ENCODE measurements at regions of chr2 and their contacts with region 1.

Region 1: DNA sequence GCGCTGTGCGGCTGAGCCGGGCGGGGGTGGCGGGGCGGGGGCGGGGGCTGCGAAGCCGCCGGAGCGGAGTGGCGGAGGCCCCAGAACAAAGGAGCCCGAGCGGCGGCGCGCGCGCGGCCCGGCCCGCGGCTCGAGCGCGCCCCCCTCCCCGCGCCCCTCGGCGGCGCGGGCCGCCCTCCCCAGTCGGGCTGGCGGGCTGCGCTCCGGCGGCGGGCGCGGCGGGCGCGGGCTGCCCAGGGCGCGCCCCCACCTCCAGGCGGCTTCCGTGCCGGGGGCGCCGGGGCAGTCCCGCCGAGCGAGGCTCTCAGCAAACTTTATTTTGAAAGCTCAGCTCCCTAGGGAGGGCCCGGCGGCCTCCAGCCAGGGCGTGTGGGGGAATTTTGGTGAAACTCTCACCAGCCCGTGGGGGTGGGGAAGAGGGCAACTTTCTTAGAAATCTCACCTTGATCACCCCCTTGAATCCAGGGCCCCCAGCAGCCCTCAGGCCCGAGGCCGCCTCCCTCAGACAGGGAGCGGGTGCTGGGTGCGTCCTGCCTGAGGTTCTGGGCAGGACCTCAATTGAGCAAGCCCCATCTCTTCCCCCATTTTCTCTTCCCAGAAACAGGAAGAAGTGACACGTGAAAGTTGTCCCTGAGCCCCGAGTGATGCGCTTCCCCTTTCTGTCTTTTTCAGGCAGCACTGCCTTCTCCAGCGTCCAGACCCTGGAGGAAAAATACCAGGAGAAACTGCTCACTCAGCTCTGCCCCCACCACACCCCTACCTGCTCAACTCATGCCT is 786 bp downstream of the TET3 start:
- DNase-seq: peak; percentile 92
- ATAC-seq: peak; percentile 72
- H3K4me3 ChIP-seq: peak overlapping the region; percentile 53 to 78 (median 66)
- H3K4me3 Mint-ChIP-seq: peak overlapping the region; percentile 82
- H3K27ac ChIP-seq: peak overlapping the region; percentile 71 to 72
- H3K27ac Mint-ChIP-seq: peak overlapping the region; percentile 89
- H3K4me1 ChIP-seq: peaks cover 55 to 66% of the 10 kb centered on the region in 2 donors
- H3K4me1 Mint-ChIP-seq: peaks cover 77% of the 10 kb centered on the region
- H3K27me3 ChIP-seq: peaks cover 0 to 3% (median under 1%) of the 10 kb centered on the region in 4 experiments
- H3K27me3 Mint-ChIP-seq: no peaks in the 10 kb centered on the region
- CTCF ChIP-seq: no peak

Region 2: GRCh38 chr2:73907840-73908452 is 77.5 kb before region 1 on chr2:
- CTCF ChIA-PET with region 1: interaction called, 16 read pairs
- POLR2A ChIA-PET with region 1: no interaction called
- intact Hi-C with region 1: loop called (anchors 5 kb)
- DNase-seq: peak; percentile 71
- ATAC-seq: peak; percentile 81
- H3K4me3 ChIP-seq: no peak overlapping the region
- H3K4me3 Mint-ChIP-seq: no peak overlapping the region
- H3K27ac ChIP-seq: no peak overlapping the region
- H3K27ac Mint-ChIP-seq: no peak overlapping the region
- H3K4me1 ChIP-seq: peaks cover 0 to 2% of the 10 kb centered on the region in 2 donors
- H3K4me1 Mint-ChIP-seq: peaks cover 2% of the 10 kb centered on the region
- H3K27me3 ChIP-seq: no peaks in the 10 kb centered on the region
- H3K27me3 Mint-ChIP-seq: no peaks in the 10 kb centered on the region
- CTCF ChIP-seq: peak; percentile 54

Region 3: DNA sequence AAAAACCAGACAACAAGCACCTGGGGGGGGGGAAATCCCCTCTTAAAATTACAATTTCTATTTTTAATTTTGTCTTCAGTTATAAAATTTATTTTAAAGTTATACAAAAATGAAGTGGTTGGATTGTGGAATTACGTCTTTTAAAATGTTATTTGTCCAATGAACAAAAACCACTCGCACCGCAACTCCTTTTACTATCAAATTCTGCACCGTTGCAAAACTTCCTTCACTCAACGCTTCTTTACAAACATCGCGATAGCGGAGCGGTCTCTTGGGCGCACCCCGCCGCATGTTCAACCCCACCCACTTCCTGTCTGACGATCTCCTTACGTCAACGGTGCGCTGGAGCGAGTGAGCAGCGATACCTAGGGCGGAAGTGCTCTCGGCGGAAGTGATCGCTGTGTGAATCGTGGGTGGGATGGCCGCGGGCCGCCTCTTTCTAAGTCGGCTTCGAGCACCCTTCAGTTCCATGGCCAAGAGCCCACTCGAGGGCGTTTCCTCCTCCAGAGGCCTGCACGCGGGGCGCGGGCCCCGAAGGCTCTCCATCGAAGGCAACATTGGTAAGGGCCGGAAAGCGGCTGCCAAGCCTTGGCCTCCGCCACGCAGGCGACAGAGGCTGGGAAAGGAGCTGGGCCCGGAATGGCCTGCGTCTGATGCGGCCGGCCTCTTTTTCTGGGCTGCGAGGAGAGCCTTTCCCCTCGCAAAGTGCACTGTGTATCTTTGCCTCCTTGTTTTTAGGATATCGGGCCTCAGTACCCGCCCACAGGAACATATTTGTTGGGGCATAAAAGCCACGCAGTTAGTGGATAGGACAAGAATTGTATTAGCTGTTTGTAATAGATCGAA is 58.8 kb before region 1 on chr2 and contains the start of gene DGUOK:
- CTCF ChIA-PET with region 1: interaction called, 3 read pairs
- POLR2A ChIA-PET with region 1: interaction called, 5 read pairs
- intact Hi-C with region 1: loop called (anchors 1 kb)
- DNase-seq: peak; percentile 99
- ATAC-seq: peak; percentile 98
- H3K4me3 ChIP-seq: peak within 1 kb of the TSS; percentile 69 to 89 (median 76)
- H3K4me3 Mint-ChIP-seq: peak within 1 kb of the TSS; percentile 86
- H3K27ac ChIP-seq: peak within 1 kb of the TSS; percentile 95 to 99
- H3K27ac Mint-ChIP-seq: peak within 1 kb of the TSS; percentile 90
- H3K4me1 ChIP-seq: peaks cover 33 to 37% of the 10 kb centered on the region in 2 donors
- H3K4me1 Mint-ChIP-seq: peaks cover 61% of the 10 kb centered on the region
- H3K27me3 ChIP-seq: no peaks in the 10 kb centered on the region
- H3K27me3 Mint-ChIP-seq: no peaks in the 10 kb centered on the region
- CTCF ChIP-seq: no peak
- total RNA-seq, gene DGUOK: 61.7 and 65.4 TPM in 2 replicates

Region 4: GRCh38 chr2:73944714-73945113 is 40.8 kb before region 1 on chr2:
- CTCF ChIA-PET with region 1: interaction called, 3 read pairs
- POLR2A ChIA-PET with region 1: no interaction called
- intact Hi-C with region 1: loop called (anchors 5 kb)
- DNase-seq: no peak
- ATAC-seq: no peak
- H3K4me3 ChIP-seq: no peak overlapping the region
- H3K4me3 Mint-ChIP-seq: no peak overlapping the region
- H3K27ac ChIP-seq: peak overlapping the region in 1 of 2 donors; percentile 13
- H3K27ac Mint-ChIP-seq: no peak overlapping the region
- H3K4me1 ChIP-seq: peaks cover 20 to 25% of the 10 kb centered on the region in 2 donors
- H3K4me1 Mint-ChIP-seq: peaks cover 47% of the 10 kb centered on the region
- H3K27me3 ChIP-seq: no peaks in the 10 kb centered on the region
- H3K27me3 Mint-ChIP-seq: no peaks in the 10 kb centered on the region
- CTCF ChIP-seq: no peak

Region 5: DNA sequence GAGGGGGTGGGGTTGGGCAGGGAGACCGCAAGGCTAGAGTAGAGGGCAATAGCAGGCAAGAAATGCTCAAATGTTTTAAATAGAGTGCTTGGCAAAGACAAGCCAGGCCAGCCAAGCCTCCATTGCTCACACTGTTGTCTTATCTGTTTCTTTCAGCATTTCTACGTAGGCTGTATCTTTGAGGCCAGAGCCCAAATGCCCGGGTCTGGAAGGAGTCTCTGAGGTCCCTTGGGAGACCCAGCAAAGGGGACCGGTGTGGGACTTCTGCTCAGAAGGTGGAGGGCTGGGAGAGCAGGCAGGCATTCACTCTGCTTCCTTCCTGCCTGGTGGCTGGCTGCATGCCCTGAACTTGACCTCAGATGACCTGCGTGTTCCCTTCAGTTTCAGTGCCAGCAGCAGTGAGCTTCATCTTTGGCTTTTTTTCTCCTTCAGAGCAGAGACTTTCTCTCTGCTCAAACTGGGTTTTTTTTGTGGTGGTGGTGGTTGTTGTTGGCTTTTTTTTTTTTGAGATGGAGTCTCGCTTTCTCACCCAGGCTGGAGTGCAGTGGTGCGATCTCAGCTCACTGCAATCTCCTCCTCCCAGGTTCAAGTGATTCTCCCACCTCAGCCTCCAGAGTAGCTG is 14.5 kb before region 1 on chr2:
- CTCF ChIA-PET with region 1: interaction called, 4 read pairs
- POLR2A ChIA-PET with region 1: no interaction called
- intact Hi-C with region 1: loop called (anchors 2 kb)
- DNase-seq: peak; percentile 76
- ATAC-seq: peak; percentile 86
- H3K4me3 ChIP-seq: peak overlapping the region in 3 of 5 experiments; percentile 23 to 47 (median 31)
- H3K4me3 Mint-ChIP-seq: peak overlapping the region; percentile 73
- H3K27ac ChIP-seq: peak overlapping the region; percentile 5 to 53
- H3K27ac Mint-ChIP-seq: peak overlapping the region; percentile 65
- H3K4me1 ChIP-seq: peaks cover 35 to 38% of the 10 kb centered on the region in 2 donors
- H3K4me1 Mint-ChIP-seq: peaks cover 46% of the 10 kb centered on the region
- H3K27me3 ChIP-seq: no peaks in the 10 kb centered on the region
- H3K27me3 Mint-ChIP-seq: no peaks in the 10 kb centered on the region
- CTCF ChIP-seq: no peak

Region 6: DNA sequence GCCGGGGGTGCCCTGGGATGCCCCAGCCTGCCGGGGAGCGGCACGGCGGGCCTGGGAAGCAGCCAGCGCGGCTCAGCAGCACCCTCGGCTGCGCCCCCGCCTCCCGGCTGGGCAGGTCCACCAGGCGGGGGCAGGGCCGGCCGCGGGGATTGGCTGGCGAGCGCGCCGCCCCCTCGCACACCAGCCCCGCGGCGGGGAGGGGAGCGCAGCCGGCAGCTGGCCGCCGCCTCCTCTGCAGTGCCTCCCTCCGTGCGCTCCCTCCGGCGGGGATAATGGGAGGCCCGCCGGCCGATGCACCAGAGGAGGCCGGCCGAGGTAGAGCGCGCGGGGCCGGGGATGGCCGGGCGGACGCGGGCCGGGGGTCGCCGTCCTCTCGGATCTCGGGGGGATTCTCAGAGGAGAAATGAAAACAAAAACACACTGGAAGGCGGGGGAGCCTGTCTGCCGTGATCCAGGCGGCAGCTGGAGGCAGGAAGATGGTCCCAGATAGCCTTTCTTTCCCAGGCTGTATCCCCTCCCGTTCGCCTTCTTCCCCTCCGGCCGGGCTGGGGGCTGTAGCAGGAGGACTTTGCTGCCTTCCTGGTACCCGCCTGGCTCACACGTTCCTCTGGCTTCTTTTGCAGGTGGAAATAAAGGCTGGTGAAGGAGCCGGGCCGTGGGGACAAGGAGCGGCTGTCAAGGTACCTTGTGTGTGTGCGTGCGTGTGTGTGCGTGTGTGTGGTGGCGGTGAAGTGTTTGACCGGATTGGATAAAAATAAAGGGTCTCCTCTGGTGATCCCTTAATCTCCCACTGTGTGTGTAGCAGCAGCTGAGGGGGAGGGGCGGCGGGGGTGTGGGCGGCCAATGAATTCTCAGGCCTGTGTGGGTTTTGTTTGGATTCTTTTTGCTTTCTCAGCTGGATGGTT is 17.2 kb after region 1 on chr2:
- CTCF ChIA-PET with region 1: interaction called, 19 read pairs
- POLR2A ChIA-PET with region 1: interaction called, 5 read pairs
- intact Hi-C with region 1: loop called (anchors 1 kb)
- DNase-seq: peak; percentile 86
- ATAC-seq: peak; percentile 98
- H3K4me3 ChIP-seq: peak overlapping the region in 4 of 5 experiments; percentile 35 to 60 (median 52)
- H3K4me3 Mint-ChIP-seq: peak overlapping the region; percentile 87
- H3K27ac ChIP-seq: no peak overlapping the region
- H3K27ac Mint-ChIP-seq: peak overlapping the region; percentile 53
- H3K4me1 ChIP-seq: peaks cover 15 to 29% of the 10 kb centered on the region in 2 donors
- H3K4me1 Mint-ChIP-seq: peaks cover 66% of the 10 kb centered on the region
- H3K27me3 ChIP-seq: no peaks in the 10 kb centered on the region
- H3K27me3 Mint-ChIP-seq: no peaks in the 10 kb centered on the region
- CTCF ChIP-seq: no peak

Region 7: GRCh38 chr2:74014813-74015212 is 29.3 kb after region 1 on chr2:
- CTCF ChIA-PET with region 1: no interaction called
- POLR2A ChIA-PET with region 1: no interaction called
- intact Hi-C with region 1: no loop called
- DNase-seq: no peak
- ATAC-seq: no peak
- H3K4me3 ChIP-seq: no peak overlapping the region
- H3K4me3 Mint-ChIP-seq: no peak overlapping the region
- H3K27ac ChIP-seq: no peak overlapping the region
- H3K27ac Mint-ChIP-seq: no peak overlapping the region
- H3K4me1 ChIP-seq: peaks cover 0 to 2% of the 10 kb centered on the region in 2 donors
- H3K4me1 Mint-ChIP-seq: peaks cover 16% of the 10 kb centered on the region
- H3K27me3 ChIP-seq: no peaks in the 10 kb centered on the region
- H3K27me3 Mint-ChIP-seq: no peaks in the 10 kb centered on the region
- CTCF ChIP-seq: no peak

Region 8: DNA sequence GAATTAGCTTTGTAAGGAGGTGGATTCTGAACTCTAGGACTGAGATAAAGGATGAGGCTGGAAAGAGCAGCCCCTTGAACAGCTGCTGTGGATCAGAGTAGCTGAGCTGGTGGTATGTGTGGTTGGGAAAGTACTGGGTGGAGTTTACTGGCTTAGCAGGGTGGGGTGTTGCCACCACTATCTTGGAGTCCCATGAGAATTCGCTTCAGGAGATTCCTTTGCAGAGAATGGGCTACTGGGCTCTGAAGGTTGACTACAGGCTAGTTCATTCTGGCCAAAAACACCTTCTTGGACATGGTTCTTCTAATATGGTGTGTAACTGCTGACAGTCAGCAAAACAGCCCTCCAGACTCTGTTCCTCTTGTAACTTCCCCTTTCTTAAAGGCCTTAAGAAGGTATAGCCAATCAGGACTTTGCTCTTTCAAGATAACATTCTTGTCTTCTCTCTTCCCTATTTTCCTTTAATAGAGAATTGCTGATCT is 51.9 kb after region 1 on chr2:
- CTCF ChIA-PET with region 1: no interaction called
- POLR2A ChIA-PET with region 1: interaction called, 3 read pairs
- intact Hi-C with region 1: loop called (anchors 2 kb)
- DNase-seq: peak; percentile 82
- ATAC-seq: peak; percentile 83
- H3K4me3 ChIP-seq: peak overlapping the region in 2 of 5 experiments; percentile 8 to 34
- H3K4me3 Mint-ChIP-seq: peak overlapping the region; percentile 82
- H3K27ac ChIP-seq: peak overlapping the region; percentile 73
- H3K27ac Mint-ChIP-seq: peak overlapping the region; percentile 88
- H3K4me1 ChIP-seq: peaks cover 72 to 73% of the 10 kb centered on the region in 2 donors
- H3K4me1 Mint-ChIP-seq: peaks cover 83% of the 10 kb centered on the region
- H3K27me3 ChIP-seq: no peaks in the 10 kb centered on the region
- H3K27me3 Mint-ChIP-seq: no peaks in the 10 kb centered on the region
- CTCF ChIP-seq: no peak

Region 9: DNA sequence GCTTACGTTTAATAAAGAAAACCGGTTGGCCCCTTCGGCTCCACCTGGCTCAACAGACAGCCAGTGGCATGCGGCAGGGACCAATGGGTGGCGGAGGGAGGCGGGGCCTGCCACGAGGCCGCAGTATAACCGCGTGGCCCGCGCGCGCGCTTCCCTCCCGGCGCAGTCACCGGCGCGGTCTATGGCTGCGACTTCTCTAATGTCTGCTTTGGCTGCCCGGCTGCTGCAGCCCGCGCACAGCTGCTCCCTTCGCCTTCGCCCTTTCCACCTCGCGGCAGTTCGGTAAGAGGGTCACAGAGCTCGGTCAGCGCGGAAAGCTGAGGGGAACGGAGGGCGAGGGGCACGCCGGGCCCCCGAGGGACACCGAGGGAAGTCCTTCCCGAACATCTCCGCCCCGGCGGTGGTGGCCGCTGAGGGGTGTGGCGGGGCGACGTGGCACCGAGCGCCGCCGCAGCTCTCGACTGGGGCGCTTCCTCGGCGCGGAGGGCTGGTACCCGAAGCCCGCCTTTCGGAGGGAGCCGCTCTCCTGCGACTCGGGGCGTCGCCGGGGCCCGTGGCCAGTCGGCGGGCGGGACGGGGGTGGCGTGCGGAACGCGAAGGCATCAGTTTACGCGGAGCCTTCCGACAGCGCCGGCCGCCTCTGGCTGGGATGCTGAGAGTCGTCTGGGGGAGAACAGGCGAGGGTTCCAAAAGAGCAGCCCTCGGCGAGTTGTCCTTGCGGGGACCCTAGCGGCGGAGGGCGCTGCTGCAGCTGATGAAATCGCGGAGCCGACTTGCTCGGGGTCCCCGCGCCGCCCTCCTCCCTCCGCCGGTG is 213.2 kb after region 1 on chr2 and contains the start of gene MTHFD2:
- CTCF ChIA-PET with region 1: no interaction called
- POLR2A ChIA-PET with region 1: no interaction called
- intact Hi-C with region 1: no loop called
- DNase-seq: peak; percentile 94
- ATAC-seq: peak; percentile 87
- H3K4me3 ChIP-seq: peak within 1 kb of the TSS; percentile 30 to 79 (median 74)
- H3K4me3 Mint-ChIP-seq: peak within 1 kb of the TSS; percentile 98
- H3K27ac ChIP-seq: peak within 1 kb of the TSS; percentile 92 to 96
- H3K27ac Mint-ChIP-seq: peak within 1 kb of the TSS; percentile 99
- H3K4me1 ChIP-seq: peaks cover 14 to 23% of the 10 kb centered on the region in 2 donors
- H3K4me1 Mint-ChIP-seq: peaks cover 24% of the 10 kb centered on the region
- H3K27me3 ChIP-seq: no peaks in the 10 kb centered on the region
- H3K27me3 Mint-ChIP-seq: no peaks in the 10 kb centered on the region
- CTCF ChIP-seq: peak; percentile 93
- total RNA-seq, gene MTHFD2: 17.4 and 18.0 TPM in 2 replicates